ENCODE measurements at regions of chr11 and their contacts with region 1.

Region 1: DNA sequence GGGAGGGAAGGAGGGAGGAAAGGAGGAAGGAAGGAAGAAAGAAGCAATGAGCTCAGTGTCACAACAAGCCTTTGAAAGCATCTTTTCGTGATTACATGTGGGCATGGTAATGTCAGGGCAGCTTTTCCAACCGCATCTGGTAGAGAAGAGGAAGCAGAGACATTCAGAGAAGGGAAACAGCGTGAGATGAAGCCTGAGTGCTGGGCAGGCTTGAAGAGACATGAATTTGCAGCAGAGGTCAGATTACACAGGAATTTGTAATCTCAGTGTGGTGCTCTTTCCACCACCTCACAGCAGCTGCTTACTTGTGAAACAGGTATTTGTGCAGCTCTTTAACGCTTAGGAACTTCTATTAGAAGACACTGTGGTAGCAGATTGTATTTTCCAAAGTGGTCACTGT is 289.5 kb upstream of the C11orf87 start:
- DNase-seq: no peak
- ATAC-seq: peak; percentile 22; the same call in 1 of the 2 replicates
- H3K4me3 ChIP-seq: no peak overlapping the region
- H3K27ac ChIP-seq: no peak overlapping the region
- H3K4me1 ChIP-seq: no peaks in the 10 kb centered on the region
- H3K27me3 ChIP-seq: peaks cover 8% of the 10 kb centered on the region; the same call in 1 of the 2 replicates
- CTCF ChIP-seq: no peak

Region 2: GRCh38 chr11:108135845-108136544 is 996.5 kb before region 1 on chr11:
- CTCF ChIA-PET with region 1: no interaction called
- POLR2A ChIA-PET with region 1: interaction called, 13 read pairs
- intact Hi-C with region 1: no loop called
- DNase-seq: peak; percentile 57
- ATAC-seq: peak; percentile 49
- H3K4me3 ChIP-seq: no peak overlapping the region
- H3K27ac ChIP-seq: no peak overlapping the region
- H3K4me1 ChIP-seq: 0 out of 2 replicates have a peak, but pooled peaks cover 3% of the 10 kb centered on the region
- H3K27me3 ChIP-seq: no peaks in the 10 kb centered on the region
- CTCF ChIP-seq: peak; percentile 59